Activated CD4-positive, alpha-beta memory T cell treated with anti-CD3 and anti-CD28 coated beads for 36 hours (primary cell): ENCODE measurements at regions of chr7 and their contacts with region 1.

Region 1: DNA sequence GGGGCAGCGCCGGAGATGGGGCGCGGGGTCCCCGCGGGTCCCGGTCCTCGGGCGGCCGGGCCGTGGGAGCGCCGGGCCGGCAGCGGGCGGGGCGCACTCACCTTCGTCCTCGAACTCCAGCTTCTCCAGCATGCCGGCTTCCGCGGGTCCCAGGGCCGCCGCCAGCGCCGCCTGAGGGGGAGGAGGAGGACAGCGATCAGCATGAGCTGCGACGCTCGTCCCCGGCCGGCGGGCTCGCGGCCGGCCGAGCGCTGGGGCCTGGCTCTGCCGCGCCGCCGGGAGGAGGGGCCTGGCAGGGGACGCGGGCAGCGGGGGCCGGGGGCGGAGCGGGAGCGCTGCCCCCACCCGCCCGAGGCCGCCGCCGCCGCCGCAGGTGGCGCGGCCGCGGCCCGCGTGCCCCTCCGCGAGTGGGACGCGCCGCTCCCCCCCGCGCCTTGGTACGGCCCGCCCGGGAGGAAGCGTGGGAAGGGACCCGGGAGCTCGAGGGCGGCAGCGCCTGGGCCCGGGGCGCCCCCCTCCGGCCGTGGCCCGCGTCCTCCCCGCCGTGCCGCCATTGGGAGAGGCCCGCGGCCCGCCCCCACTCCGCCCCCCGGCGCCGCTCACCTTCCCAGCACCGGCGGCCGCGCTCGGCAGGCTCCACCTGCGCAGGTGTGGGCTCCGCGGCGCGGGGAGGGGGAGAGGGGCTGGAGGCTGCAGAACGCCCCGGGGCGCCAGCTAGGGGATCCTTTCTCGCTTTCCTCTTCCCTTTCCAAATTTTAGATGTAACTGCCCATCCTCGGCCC is 112.5 kb upstream of the RHEB start:
- DNase-seq: peak; percentile 90
- H3K4me3 Mint-ChIP-seq: peak overlapping the region; percentile 95
- H3K27ac Mint-ChIP-seq: peak overlapping the region; percentile 99
- H3K4me1 Mint-ChIP-seq: peaks cover 21% of the 10 kb centered on the region
- H3K27me3 Mint-ChIP-seq: no peaks in the 10 kb centered on the region

Region 2: DNA sequence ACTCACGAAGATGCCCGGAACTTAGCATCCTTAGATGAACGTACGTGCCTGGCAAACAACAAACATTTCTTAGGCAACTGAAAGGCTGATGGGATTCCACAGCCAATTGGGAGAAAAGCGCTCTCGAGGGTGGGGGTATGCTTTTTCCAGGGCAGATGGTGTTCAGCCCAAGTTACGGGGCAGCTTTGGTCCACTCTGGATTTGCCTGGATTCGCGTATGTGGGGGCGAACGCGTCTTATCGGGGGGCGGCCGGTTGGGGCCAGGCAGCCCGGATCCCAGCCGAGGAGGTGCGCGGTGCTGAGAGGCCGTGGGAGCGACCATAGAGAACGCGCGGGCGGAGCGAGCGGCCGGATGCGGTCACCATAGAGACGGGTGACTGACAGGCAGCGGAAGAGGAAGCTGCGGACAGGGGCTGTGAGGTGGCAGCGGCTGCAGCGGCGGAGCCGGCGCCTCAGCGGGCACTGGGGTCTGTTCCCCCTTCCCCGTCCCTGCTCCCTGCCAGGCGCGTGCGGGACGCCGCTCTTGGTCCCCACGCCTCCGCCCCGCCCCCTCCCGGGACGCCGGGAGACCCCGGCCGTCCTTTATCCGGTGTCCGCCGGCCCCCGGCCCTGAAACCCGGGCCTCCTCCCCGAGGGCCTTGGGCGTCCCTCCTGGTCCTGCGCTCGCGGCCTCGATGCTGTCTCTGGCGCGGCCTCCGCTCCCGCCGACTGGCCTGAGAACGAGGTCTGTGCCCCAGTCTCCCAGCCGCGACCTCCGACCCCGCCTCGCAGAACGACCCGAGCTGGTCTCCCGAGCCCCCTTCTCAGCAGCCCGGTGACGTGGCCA is 399.9 kb before region 1 on chr7 and contains the start of gene CHPF2:
- CTCF ChIA-PET with region 1: no interaction called
- POLR2A ChIA-PET with region 1: no interaction called
- intact Hi-C with region 1: loop called (anchors 2 kb)
- DNase-seq: peak; percentile 95
- H3K4me3 Mint-ChIP-seq: peak within 1 kb of the TSS; percentile 100
- H3K27ac Mint-ChIP-seq: peak within 1 kb of the TSS; percentile 99
- H3K4me1 Mint-ChIP-seq: peaks cover 38% of the 10 kb centered on the region
- H3K27me3 Mint-ChIP-seq: no peaks in the 10 kb centered on the region
- total RNA-seq, gene CHPF2: 33.6 to 34.2 TPM

Region 3: DNA sequence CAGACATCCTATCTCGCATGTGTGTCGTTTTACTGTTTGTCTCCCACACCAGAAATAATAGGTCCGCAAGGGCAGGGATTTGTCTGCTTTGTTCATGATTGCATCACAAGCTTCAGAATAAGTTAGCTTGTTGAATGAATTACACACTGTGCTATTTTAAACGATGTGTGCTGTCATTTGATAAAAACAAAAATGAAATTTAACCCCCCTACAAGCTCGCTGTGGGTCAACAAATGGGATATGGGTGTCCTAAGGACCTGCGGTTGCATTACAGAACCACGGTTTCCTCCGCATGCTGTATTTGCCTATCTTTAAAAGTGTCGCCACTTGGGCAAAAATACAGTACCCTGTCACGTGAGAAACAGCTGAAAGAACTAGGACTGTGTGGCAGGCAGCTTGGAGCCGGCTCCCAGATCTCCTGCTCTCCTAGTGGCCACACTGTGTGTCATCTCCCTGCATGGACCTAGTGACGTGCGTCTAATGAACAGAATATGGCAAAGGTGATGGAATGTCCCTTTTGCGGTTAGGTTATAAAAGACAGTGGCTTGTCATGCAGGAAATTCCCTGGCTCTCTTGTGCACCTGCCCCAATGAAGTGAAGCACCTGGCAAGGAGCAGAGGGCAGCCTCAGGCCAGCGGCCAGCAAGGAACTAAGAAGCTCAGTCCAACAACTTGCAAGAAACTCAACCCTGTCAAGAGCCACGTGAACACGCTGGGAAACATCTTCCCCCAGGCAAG is 159.3 kb before region 1 on chr7:
- CTCF ChIA-PET with region 1: interaction called, 4 read pairs
- POLR2A ChIA-PET with region 1: no interaction called
- intact Hi-C with region 1: loop called (anchors 2 kb)
- DNase-seq: no peak
- H3K4me3 Mint-ChIP-seq: no peak overlapping the region
- H3K27ac Mint-ChIP-seq: peak overlapping the region; percentile 67
- H3K4me1 Mint-ChIP-seq: peaks cover 48% of the 10 kb centered on the region
- H3K27me3 Mint-ChIP-seq: no peaks in the 10 kb centered on the region

Region 4: GRCh38 chr7:151519765-151520418 is 112.3 kb before region 1 on chr7 and contains the start of gene RHEB:
- CTCF ChIA-PET with region 1: interaction called, 9 read pairs
- POLR2A ChIA-PET with region 1: interaction called, 25 read pairs
- intact Hi-C with region 1: loop called (anchors 1 kb)
- DNase-seq: peak; percentile 99
- H3K4me3 Mint-ChIP-seq: peak within 1 kb of the TSS; percentile 92
- H3K27ac Mint-ChIP-seq: peak within 1 kb of the TSS; percentile 96
- H3K4me1 Mint-ChIP-seq: peaks cover 35% of the 10 kb centered on the region
- H3K27me3 Mint-ChIP-seq: no peaks in the 10 kb centered on the region
- total RNA-seq, gene RHEB: 62.0 to 64.6 TPM

Region 5: DNA sequence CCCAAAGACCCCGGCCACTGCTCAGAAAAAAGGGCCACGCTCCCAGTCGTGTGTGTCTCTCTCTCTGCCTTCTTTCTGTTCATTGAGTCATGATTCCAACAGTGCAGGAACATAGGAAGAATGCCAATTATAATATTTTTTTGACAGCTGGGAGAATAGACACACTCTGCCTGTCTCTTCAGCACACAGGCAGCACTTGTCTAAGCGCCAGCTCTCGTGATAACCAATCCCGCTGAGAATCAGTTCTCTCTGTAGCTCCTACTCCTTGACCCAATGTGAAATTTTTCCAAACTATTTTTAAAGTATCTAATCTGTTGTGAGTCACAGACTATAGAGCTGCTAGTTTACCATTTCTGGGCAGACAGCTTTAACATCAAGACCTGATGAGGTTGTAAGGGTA is 33.2 kb after region 1 on chr7:
- CTCF ChIA-PET with region 1: no interaction called
- POLR2A ChIA-PET with region 1: no interaction called
- intact Hi-C with region 1: no loop called
- DNase-seq: no peak
- H3K4me3 Mint-ChIP-seq: no peak overlapping the region
- H3K27ac Mint-ChIP-seq: no peak overlapping the region
- H3K4me1 Mint-ChIP-seq: no peaks in the 10 kb centered on the region
- H3K27me3 Mint-ChIP-seq: no peaks in the 10 kb centered on the region

Region 6: DNA sequence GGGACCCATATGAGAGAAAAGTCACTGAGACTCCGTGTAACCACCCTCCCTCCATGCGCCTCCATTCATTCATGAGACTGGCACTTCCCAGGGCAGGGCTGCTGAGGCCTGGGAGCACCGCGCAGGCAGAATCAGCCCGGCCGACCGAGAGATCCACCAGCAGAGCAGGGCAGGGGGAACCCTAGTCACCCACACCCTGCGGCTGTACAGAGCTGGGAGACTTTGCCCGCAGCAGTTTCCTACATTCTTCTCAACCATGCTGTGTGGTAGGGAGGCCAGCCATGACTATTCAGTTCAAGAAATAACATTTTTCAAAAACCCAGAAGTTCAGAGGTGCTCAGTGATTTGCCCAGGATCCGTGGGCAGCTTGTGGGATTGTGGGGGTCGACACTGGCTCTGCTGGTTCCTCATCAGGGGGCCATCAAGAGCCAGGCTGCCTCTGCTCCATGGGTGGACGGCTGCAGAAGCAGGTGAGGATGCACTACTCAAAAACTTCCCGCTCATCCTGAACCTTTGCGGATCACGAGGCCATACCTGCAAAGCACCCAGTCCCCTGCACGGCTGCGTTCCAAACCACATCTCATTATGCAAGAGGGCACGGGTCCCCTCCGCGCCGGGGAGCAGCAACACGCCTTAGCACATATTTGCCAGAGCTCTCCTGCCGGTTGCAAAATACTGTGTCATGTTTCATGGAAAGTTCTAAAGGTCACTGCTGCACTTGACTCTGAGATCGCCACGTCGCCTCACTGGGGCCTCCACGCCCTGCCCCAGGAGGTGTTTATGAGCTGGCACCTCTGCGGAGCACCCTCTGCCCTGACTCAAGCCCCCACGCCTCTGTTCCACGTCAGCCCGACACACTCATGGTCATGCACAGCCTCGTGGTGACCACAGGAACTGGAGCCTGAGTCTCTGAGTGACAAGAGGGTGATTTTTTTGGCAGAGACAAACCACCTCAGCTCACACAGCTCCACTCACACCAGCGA is 112.8 kb after region 1 on chr7:
- CTCF ChIA-PET with region 1: no interaction called
- POLR2A ChIA-PET with region 1: interaction called, 4 read pairs
- intact Hi-C with region 1: loop called (anchors 1 kb)
- DNase-seq: peak; percentile 80
- H3K4me3 Mint-ChIP-seq: no peak overlapping the region
- H3K27ac Mint-ChIP-seq: no peak overlapping the region
- H3K4me1 Mint-ChIP-seq: peaks cover 41% of the 10 kb centered on the region
- H3K27me3 Mint-ChIP-seq: no peaks in the 10 kb centered on the region